Naive thymus-derived CD4-positive, alpha-beta T cell (primary cell): ENCODE measurements at regions of chr11 and their contacts with region 1.

Region 1: DNA sequence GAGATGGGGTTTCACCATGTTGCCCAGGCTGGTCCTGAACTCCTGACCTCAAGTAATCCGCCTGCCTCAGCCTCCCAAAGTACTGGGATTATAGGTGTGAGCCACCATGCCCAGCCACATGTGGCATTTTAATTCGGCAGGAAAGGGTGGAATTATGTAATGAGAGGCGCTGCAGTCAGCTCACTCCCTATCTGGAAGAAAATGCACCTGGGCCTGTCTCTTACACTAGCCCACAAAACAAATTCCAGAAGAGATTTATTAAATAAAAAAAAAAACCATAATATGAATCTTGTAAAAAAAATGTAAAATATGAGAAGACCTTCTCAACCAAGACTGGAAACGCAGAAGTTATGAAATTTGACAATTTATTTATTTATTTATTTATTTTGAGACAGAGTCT is 8.2 kb upstream of the KAT5 start:
- DNase-seq: no peak
- ATAC-seq: no peak
- H3K4me3 ChIP-seq: no peak overlapping the region
- H3K4me3 Mint-ChIP-seq: no peak overlapping the region
- H3K27ac ChIP-seq: no peak overlapping the region
- H3K27ac Mint-ChIP-seq: no peak overlapping the region
- H3K4me1 ChIP-seq: no peaks in the 10 kb centered on the region
- H3K4me1 Mint-ChIP-seq: peaks cover 0 to 7% (median 4%) of the 10 kb centered on the region in 7 donors
- H3K27me3 ChIP-seq: no peaks in the 10 kb centered on the region
- H3K27me3 Mint-ChIP-seq: peaks cover 0 to 19% (median 0%) of the 10 kb centered on the region in 5 donors

Region 2: DNA sequence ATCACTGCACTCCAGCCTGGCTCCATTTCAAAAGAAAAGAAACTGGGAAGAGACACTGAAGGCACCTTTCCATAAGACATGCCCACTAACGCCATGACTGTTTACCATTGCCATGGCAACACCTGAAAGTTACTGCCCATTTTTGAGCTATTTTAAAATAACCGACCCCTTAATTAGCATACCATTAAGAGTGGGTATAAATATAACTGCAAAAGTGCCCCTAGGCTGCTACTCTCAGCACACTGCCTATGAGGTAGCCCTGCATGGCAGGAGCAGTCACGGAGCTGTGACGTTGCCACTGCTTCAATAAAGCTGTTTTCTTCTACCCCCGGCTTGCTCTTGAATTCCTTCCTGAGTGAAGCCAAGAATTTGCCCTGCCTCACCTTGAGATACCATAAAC is 26.6 kb after region 1 on chr11:
- CTCF ChIA-PET with region 1: no interaction called
- POLR2A ChIA-PET with region 1: no interaction called
- intact Hi-C with region 1: loop called in 1 of 2 experiments (anchors 1 kb)
- DNase-seq: no peak
- ATAC-seq: no peak
- H3K4me3 ChIP-seq: no peak overlapping the region
- H3K4me3 Mint-ChIP-seq: no peak overlapping the region
- H3K27ac ChIP-seq: no peak overlapping the region
- H3K27ac Mint-ChIP-seq: no peak overlapping the region
- H3K4me1 ChIP-seq: no peaks in the 10 kb centered on the region
- H3K4me1 Mint-ChIP-seq: peaks cover 0 to 2% (median 0%) of the 10 kb centered on the region in 7 donors
- H3K27me3 ChIP-seq: no peaks in the 10 kb centered on the region
- H3K27me3 Mint-ChIP-seq: peaks cover 0 to 19% (median 9%) of the 10 kb centered on the region in 5 donors